H1 (cell line): ENCODE measurements at regions of chr19 and their contacts with region 1.

Region 1: GRCh38 chr19:46840136-46840942 is 10.3 kb downstream of the AP2S1 start:
- DNase-seq: peak in 1 of 2 experiments; percentile 60
- H3K4me3 ChIP-seq: no peak overlapping the region
- H3K27ac ChIP-seq: 0 out of 2 replicates have a peak overlapping the region, but pooled peaks have one; percentile 44
- H3K4me1 ChIP-seq: no peaks in the 10 kb centered on the region
- H3K27me3 ChIP-seq: no peaks in the 10 kb centered on the region
- CTCF ChIP-seq: peak; percentile 78 to 93 (median 85)
- EP300 ChIP-seq: no peak
- POLR2A ChIP-seq: no peak
- RAD21 ChIP-seq: peak; percentile 88 to 90

Region 2: DNA sequence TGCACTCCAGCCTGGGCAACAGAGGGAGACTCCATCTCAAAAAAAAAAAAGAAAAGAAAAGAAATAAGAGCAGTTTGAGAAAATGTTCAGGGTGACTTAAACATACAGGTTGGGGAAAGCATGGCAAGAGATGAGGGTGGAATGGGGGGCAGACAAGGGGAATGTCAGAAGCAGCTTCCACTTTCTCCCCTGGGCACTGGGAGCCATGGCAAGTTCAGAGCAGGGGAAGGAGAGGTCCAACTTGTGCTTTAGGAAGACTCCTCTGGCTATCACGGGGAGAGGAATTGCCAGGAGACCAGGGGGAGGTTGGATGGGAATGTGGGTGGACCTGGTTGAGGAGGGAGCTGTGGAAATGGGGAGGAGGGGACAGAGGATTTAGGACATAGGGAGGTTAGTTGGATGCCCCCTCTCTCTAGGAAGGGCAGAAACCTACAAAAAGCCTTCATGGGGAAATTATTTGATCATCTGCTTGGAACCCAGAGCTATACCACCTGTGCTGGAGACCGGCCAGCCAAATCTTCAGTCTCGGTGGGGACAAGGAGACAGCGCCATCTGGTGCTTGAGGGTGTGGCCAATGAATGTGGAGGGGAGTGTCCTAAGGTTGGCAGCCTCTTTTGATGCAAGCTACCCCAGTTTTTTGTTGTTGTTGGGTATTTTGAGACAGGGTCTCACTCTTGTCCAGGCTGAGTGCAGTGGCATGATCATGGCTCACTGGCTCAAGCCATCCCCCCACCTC is 86.8 kb before region 1 on chr19:
- CTCF ChIA-PET with region 1: interaction called, 44 read pairs
- POLR2A ChIA-PET with region 1: interaction called, 3 read pairs
- DNase-seq: peak in 1 of 2 experiments; percentile 78
- H3K4me3 ChIP-seq: no peak overlapping the region
- H3K27ac ChIP-seq: no peak overlapping the region
- H3K4me1 ChIP-seq: no peaks in the 10 kb centered on the region; a peak in 2 of 7 replicates
- H3K27me3 ChIP-seq: no peaks in the 10 kb centered on the region
- CTCF ChIP-seq: peak; percentile 73 to 80 (median 78)
- EP300 ChIP-seq: no peak
- POLR2A ChIP-seq: no peak
- RAD21 ChIP-seq: peak; percentile 45 to 53

Region 3: GRCh38 chr19:46797881-46798280 is 42.5 kb before region 1 on chr19:
- CTCF ChIA-PET with region 1: interaction called, 13 read pairs
- POLR2A ChIA-PET with region 1: interaction called, 13 read pairs
- DNase-seq: no peak
- H3K4me3 ChIP-seq: no peak overlapping the region
- H3K27ac ChIP-seq: no peak overlapping the region
- H3K4me1 ChIP-seq: no peaks in the 10 kb centered on the region
- H3K27me3 ChIP-seq: no peaks in the 10 kb centered on the region; a peak in 1 of 7 replicates
- CTCF ChIP-seq: no peak
- EP300 ChIP-seq: no peak
- POLR2A ChIP-seq: no peak
- RAD21 ChIP-seq: no peak

Region 4: DNA sequence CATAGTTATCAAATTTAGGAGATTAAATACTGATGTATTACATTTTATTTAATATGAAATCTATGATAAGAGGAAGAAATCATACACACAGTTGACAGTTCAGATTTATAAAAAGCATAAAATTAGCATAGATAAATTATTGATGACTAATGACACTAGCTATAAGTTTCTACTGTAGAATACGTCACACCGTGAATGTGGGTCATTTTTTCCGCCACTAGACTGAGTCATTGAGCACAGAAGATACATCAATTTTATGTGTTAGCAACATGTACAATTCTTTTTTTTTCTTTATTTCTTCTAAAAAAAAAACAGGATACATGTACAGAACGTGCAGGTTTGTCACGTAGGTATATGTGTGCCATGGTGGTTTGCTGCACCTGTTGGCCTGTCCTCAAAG is 11.9 kb before region 1 on chr19:
- CTCF ChIA-PET with region 1: interaction called, 34 read pairs
- POLR2A ChIA-PET with region 1: interaction called, 6 read pairs
- DNase-seq: no peak
- H3K4me3 ChIP-seq: no peak overlapping the region
- H3K27ac ChIP-seq: no peak overlapping the region
- H3K4me1 ChIP-seq: 0 out of 7 replicates have a peak, but pooled peaks cover 0 to 2% (median 0%) of the 10 kb centered on the region in 4 experiments
- H3K27me3 ChIP-seq: no peaks in the 10 kb centered on the region
- CTCF ChIP-seq: no peak
- EP300 ChIP-seq: no peak
- POLR2A ChIP-seq: no peak
- RAD21 ChIP-seq: no peak